Head of caudate nucleus (tissue), 42 donors: ENCODE measurements at regions of chr12 and their contacts with region 1.

Region 1: GRCh38 chr12:48851883-48852733 is at the start of gene DDX23:
- DNase-seq: peak; percentile 86 to 99 (median 95)

Region 2: DNA sequence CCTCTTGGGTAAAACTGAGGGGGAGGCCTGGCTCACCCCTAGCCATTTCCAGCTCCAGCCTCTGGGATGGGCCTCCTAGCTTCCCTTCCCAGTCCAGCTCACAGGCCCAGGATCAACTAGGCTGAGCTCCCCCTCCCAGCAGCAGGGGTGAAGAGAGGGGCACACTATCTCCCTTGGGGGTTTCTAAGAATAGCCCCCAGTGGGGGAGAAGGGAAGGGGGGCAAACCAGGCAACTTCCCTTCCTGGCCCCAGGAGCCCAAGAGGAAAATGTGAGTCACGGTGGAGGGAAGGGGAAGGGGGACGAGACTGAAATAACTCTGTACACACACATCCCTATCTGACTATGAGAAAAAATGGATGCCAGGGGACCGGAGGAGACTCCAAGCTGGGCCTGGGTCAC is 72.2 kb before region 1 on chr12:
- intact Hi-C with region 1: no loop called
- DNase-seq: no peak

Region 3: GRCh38 chr12:48890657-48891418 is 38.7 kb after region 1 on chr12:
- intact Hi-C with region 1: loop called (anchors 2 kb)
- DNase-seq: peak; percentile 80 to 97 (median 90)